Activated CD8-positive, alpha-beta T cell treated with anti-CD3 and anti-CD28 coated beads, Interleukin-2, amount 10 ng/mL, durations not matched to agents 7 days and 5 days (primary cell): ENCODE measurements at regions of chr20 and their contacts with region 1.

Region 1: GRCh38 chr20:19628570-19629169 is 129.4 kb upstream of the RIN2 start:
- DNase-seq: peak; percentile 67
- ATAC-seq: no peak
- H3K4me3 Mint-ChIP-seq: no peak overlapping the region
- H3K27ac Mint-ChIP-seq: no peak overlapping the region
- H3K4me1 Mint-ChIP-seq: no peaks in the 10 kb centered on the region
- H3K27me3 Mint-ChIP-seq: no peaks in the 10 kb centered on the region

Region 2: DNA sequence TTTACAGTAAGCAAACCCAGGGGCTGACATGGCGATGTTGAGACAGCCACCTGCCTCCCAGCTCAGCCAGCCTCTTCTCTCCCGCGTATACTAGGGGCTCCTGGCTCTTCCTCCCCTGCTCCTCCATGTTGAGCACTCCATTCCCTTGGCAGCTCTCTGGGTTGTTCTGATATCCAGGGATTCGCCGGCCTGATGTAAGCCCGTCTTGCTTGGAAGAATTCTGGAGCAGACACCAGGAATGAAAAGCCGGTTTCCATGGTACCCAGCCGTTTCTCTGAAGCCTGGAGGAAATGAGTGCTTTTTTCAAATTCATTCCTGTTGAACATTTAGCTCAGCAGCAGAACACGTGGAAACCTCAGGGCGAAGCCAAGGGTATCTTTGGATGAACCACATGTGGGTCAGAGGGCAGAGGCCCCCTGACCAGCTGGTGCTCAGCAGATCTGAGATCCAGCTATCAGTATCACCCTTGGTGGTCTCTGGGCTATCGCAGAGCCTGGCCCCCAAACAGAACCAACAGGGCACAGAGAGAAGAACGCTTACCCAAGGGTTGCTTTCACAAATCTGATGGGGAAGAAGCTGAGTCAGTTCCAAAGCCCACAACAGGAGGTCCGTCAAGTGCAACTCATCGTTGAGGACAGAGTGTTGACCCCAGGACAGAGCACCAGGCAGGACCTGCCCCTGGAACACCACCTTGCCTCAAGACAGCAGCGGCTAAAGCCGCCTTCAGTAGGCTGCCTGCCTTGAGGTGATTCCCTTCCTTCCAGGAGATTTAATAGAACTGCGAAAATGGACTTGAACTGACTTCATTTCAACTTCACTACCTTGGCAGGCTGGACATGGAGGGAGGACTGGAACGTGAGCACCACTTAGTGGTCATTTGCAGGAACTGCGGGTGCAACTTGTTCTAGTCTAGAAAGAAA is 33.3 kb after region 1 on chr20:
- CTCF ChIA-PET with region 1: interaction called, 24 read pairs
- POLR2A ChIA-PET with region 1: no interaction called
- DNase-seq: peak; percentile 64
- ATAC-seq: peak; percentile 47
- H3K4me3 Mint-ChIP-seq: no peak overlapping the region
- H3K27ac Mint-ChIP-seq: no peak overlapping the region
- H3K4me1 Mint-ChIP-seq: peaks cover 2% of the 10 kb centered on the region
- H3K27me3 Mint-ChIP-seq: no peaks in the 10 kb centered on the region